H1 (cell line): ENCODE measurements at regions of chr11 and their contacts with region 1.

Region 1: GRCh38 chr11:30244265-30244664 is 13.5 kb downstream of the FSHB start:
- DNase-seq: no peak
- H3K4me3 ChIP-seq: no peak overlapping the region
- H3K27ac ChIP-seq: no peak overlapping the region
- H3K4me1 ChIP-seq: no peaks in the 10 kb centered on the region
- H3K27me3 ChIP-seq: no peaks in the 10 kb centered on the region
- CTCF ChIP-seq: no peak
- EP300 ChIP-seq: no peak
- POLR2A ChIP-seq: no peak
- RAD21 ChIP-seq: no peak

Region 2: DNA sequence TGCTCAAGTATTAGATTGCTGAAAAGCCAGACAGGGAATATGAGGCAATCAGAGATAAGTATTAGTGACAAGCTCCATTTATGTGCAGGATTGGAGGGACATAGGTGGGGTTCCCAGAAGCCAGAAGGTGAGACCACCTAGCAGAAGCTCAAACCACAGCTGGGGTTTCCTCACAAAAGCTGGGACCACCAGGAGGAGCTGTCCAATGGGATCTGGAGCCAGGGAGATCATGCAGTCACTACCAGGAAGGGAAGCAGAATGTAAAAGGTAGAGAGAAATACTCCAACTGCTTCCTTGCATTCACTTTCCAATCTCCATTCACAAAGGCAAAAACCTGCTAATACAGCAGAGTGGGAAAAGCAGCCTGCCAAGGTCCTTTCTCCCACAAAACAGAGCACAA is 18.6 kb before region 1 on chr11:
- CTCF ChIA-PET with region 1: interaction called, 10 read pairs
- POLR2A ChIA-PET with region 1: no interaction called
- DNase-seq: no peak
- H3K4me3 ChIP-seq: no peak overlapping the region
- H3K27ac ChIP-seq: no peak overlapping the region
- H3K4me1 ChIP-seq: no peaks in the 10 kb centered on the region
- H3K27me3 ChIP-seq: no peaks in the 10 kb centered on the region
- CTCF ChIP-seq: peak in 2 of 3 experiments; percentile 5 to 19; a peak in 2 of 4 replicates
- EP300 ChIP-seq: no peak
- POLR2A ChIP-seq: no peak
- RAD21 ChIP-seq: peak; percentile 25 to 26; a peak in 2 of 4 replicates

Region 3: GRCh38 chr11:30254307-30255298 is 10.3 kb after region 1 on chr11:
- CTCF ChIA-PET with region 1: interaction called, 24 read pairs
- POLR2A ChIA-PET with region 1: no interaction called
- DNase-seq: no peak
- H3K4me3 ChIP-seq: no peak overlapping the region
- H3K27ac ChIP-seq: no peak overlapping the region
- H3K4me1 ChIP-seq: no peaks in the 10 kb centered on the region
- H3K27me3 ChIP-seq: no peaks in the 10 kb centered on the region
- CTCF ChIP-seq: no peak
- EP300 ChIP-seq: no peak
- POLR2A ChIP-seq: no peak
- RAD21 ChIP-seq: no peak

Region 4: GRCh38 chr11:30406978-30407762 is 162.9 kb after region 1 on chr11:
- CTCF ChIA-PET with region 1: no interaction called
- POLR2A ChIA-PET with region 1: no interaction called
- DNase-seq: peak in 1 of 2 experiments; percentile 29
- H3K4me3 ChIP-seq: no peak overlapping the region
- H3K27ac ChIP-seq: no peak overlapping the region
- H3K4me1 ChIP-seq: peaks cover 0 to 5% (median 0%) of the 10 kb centered on the region in 4 experiments; a peak in 3 of 7 replicates
- H3K27me3 ChIP-seq: peaks cover 0 to 7% (median 0%) of the 10 kb centered on the region in 4 experiments; a peak in 3 of 7 replicates
- CTCF ChIP-seq: no peak
- EP300 ChIP-seq: no peak
- POLR2A ChIP-seq: no peak
- RAD21 ChIP-seq: no peak